Activated CD4-positive, alpha-beta T cell treated with anti-CD3 and anti-CD28 coated beads, Interleukin-2, amount 10 ng/mL, durations not matched to agents 7 days and 5 days (primary cell): ENCODE measurements at regions of chr13 and their contacts with region 1.

Region 1: GRCh38 chr13:98541191-98541590 is 35.7 kb downstream of the STK24 start:
- DNase-seq: no peak
- H3K4me3 Mint-ChIP-seq: no peak overlapping the region
- H3K27ac Mint-ChIP-seq: no peak overlapping the region
- H3K4me1 Mint-ChIP-seq: peaks cover 90% of the 10 kb centered on the region
- H3K27me3 Mint-ChIP-seq: no peaks in the 10 kb centered on the region

Region 2: DNA sequence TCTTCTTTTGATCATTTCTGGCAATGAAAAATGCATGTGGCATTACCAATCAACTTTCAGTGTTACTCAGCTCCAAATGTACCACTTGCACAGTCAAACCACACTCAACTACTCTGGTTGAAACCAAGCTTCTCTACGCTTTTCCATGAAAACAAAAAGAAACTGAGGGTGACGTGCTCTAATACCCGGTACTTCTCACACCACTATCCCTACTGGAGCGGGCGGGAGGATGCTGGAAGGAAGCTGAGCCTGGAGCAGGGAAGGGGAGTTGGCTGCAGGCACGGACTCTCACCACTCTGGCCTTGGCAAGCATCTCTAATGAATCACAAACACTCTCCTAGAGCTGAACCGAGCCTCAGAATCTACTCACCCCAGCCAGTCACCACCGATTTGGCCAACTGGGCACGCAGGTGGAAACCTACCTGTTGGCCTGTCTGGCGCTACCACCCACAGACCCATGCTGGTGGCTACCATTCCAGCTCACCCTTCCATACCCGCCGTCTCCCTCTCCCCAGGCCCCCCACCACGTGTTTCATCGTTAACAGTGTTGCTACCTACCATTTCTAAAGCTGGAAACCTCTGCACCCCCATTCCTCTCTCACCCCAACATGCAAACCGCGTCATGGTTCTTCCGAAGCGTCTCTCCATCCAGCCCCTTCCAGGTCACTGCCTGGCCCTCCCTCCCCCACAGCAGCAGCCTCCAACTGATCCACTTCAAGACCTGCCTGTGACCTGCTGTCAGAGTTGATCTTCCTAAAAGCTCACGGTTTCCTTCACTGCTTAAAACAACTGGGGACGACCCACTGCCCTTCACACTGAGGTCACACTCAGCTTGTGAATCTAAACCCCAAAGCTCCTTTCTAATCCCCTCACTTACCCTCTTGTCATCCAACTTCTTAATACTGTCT is 12.3 kb before region 1 on chr13:
- CTCF ChIA-PET with region 1: interaction called, 17 read pairs
- POLR2A ChIA-PET with region 1: no interaction called
- DNase-seq: no peak
- H3K4me3 Mint-ChIP-seq: no peak overlapping the region
- H3K27ac Mint-ChIP-seq: peak overlapping the region; percentile 34
- H3K4me1 Mint-ChIP-seq: peaks cover 78% of the 10 kb centered on the region
- H3K27me3 Mint-ChIP-seq: no peaks in the 10 kb centered on the region

Region 3: DNA sequence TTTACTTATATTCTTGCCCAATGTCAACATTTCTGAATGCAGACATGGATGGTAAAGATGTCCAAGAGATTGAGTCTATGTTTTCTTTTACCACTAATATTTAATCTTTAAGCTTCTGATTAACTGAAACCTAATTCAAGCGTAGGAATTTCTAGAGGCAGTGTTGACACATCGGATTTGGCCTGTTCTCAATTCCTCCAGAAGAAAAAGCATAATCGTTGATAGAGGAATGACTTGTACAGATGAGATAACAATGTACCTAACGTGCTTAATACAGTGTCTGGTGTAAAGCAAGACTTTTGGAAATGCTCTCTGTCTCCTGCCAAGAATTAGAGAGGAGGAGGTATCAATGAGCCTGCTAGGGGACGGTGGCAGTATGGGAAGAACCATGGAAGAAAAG is 176.1 kb after region 1 on chr13:
- CTCF ChIA-PET with region 1: no interaction called
- POLR2A ChIA-PET with region 1: no interaction called
- DNase-seq: no peak
- H3K4me3 Mint-ChIP-seq: no peak overlapping the region
- H3K27ac Mint-ChIP-seq: no peak overlapping the region
- H3K4me1 Mint-ChIP-seq: no peaks in the 10 kb centered on the region
- H3K27me3 Mint-ChIP-seq: no peaks in the 10 kb centered on the region